Left cardiac atrium (tissue), 4 donors: ENCODE measurements at regions of chr2 and their contacts with region 1.

Region 1: GRCh38 chr2:24382363-24383073 is 22.2 kb upstream of the ITSN2 start:
- DNase-seq: peak; percentile 41
- ATAC-seq: peak; percentile 90 to 94

Region 2: DNA sequence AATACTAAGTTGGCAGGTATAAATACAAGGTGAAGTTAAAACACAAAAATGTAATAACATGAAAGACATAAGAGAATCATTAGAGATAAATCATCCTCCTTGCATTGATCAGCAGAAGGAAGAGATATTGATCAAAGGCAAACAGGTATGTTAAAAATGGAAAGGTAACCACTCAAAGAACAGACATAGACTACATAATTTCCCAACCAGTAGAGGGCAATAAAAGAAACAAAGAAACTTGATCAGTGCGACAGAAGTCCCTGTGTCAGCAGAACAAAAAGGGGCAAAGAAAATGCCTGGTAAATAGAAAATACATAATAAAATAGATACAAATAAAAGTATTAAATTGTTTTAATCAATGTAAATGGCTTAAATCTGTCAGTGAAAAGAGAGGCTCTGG is 154.0 kb before region 1 on chr2:
- intact Hi-C with region 1: loop called (anchors 5 to 10 kb)
- DNase-seq: no peak
- ATAC-seq: no peak

Region 3: DNA sequence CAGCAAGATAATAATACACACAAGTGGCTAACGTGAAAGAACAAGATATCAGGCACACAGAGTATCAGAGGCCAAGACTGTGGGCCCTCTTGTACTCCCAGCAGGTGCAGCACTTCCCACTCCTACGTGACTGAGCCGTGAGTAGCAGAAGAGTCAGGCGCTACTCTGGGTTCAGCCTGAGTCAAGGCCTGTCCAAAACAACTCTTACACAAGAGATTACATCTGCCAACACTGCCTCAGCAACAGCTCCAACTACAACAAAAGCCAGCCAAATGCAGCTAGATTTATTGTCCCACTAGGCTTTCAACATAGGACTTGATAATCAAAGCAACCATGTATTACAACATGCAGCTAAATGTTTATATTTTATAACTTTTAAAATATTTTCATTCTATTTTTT is 78.4 kb before region 1 on chr2:
- intact Hi-C with region 1: no loop called
- DNase-seq: peak; percentile 76
- ATAC-seq: peak; percentile 99 to 100